ENCODE measurements at regions of chr15 and their contacts with region 1.

Region 1: GRCh38 chr15:63402498-63403253 is 21.0 kb upstream of the CA12 start:
- DNase-seq: no peak
- ATAC-seq: peak; percentile 34
- H3K4me3 Mint-ChIP-seq: no peak overlapping the region
- H3K27ac Mint-ChIP-seq: no peak overlapping the region
- H3K4me1 Mint-ChIP-seq: peaks cover 8% of the 10 kb centered on the region
- H3K27me3 Mint-ChIP-seq: no peaks in the 10 kb centered on the region
- CTCF ChIP-seq: no peak

Region 2: GRCh38 chr15:63122002-63122893 is 280.4 kb before region 1 on chr15:
- CTCF ChIA-PET with region 1: no interaction called
- POLR2A ChIA-PET with region 1: no interaction called
- intact Hi-C with region 1: loop called (anchors 10 kb)
- DNase-seq: peak; percentile 77
- ATAC-seq: peak; percentile 88
- H3K4me3 Mint-ChIP-seq: peak overlapping the region; percentile 86
- H3K27ac Mint-ChIP-seq: peak overlapping the region; percentile 86
- H3K4me1 Mint-ChIP-seq: peaks cover 15% of the 10 kb centered on the region
- H3K27me3 Mint-ChIP-seq: no peaks in the 10 kb centered on the region
- CTCF ChIP-seq: no peak

Region 3: DNA sequence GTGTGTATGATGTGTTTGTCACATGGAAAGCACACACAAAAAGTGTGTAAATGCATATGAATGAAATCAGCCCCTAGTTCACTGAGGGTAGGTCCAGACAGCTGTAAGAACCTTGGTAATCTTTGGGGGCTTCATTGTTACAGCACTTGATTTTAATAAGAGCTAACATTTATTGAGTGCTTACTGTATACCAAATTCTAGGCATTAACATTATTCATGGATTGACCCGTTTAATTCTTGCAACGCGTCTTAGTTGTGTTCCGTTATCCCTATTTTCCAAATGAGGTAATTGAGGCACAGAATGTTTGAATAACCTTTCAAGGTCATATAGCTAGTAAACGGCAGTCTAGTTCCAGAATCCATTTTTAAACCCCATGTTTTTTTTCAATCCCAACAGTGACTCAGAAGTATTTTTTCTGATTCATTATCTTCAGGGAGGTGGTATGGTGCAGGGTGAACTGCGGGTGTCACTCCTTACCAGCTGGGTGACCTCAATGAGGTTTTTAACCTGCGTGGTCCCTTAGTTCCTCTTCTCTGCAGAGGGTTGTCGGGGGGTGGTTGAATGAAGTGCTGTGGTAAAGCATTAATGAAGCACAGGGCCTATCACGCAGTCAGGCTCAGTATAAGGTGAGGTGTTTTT is 199.1 kb before region 1 on chr15:
- CTCF ChIA-PET with region 1: no interaction called
- POLR2A ChIA-PET with region 1: no interaction called
- intact Hi-C with region 1: loop called (anchors 1 kb)
- DNase-seq: no peak
- ATAC-seq: peak; percentile 99
- H3K4me3 Mint-ChIP-seq: no peak overlapping the region
- H3K27ac Mint-ChIP-seq: peak overlapping the region; percentile 73
- H3K4me1 Mint-ChIP-seq: peaks cover 85% of the 10 kb centered on the region
- H3K27me3 Mint-ChIP-seq: no peaks in the 10 kb centered on the region
- CTCF ChIP-seq: no peak

Region 4: DNA sequence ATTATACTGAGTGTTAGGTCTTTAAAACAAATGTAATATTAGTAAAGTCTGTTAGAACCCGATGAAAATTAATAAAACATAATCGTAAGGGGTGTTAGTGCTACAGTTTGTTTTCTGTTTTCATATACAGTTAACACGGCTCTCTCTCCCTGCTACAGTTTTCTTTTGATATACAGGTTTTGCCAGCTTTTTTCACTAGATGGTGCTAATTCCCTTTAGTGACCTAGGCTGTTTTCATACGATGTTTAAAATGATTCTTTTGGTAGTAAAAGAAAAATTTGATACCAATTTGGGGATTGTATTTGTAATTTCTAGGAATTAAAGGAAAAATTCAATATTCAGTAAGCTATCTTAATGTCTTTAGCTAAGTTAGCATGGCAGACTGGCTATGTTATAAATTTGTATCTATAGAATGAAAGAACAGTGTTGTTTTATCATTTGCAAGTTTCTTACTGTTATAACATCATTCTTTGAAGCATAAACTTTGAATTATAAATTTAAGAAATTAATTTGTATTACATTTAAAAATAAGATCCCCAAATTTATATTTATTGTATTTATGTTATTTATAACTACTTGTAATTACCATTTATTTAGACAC is 113.8 kb before region 1 on chr15:
- CTCF ChIA-PET with region 1: interaction called, 56 read pairs
- POLR2A ChIA-PET with region 1: no interaction called
- intact Hi-C with region 1: loop called (anchors 1 kb)
- DNase-seq: no peak
- ATAC-seq: peak; percentile 45
- H3K4me3 Mint-ChIP-seq: no peak overlapping the region
- H3K27ac Mint-ChIP-seq: no peak overlapping the region
- H3K4me1 Mint-ChIP-seq: peaks cover 15% of the 10 kb centered on the region
- H3K27me3 Mint-ChIP-seq: no peaks in the 10 kb centered on the region
- CTCF ChIP-seq: no peak